ENCODE measurements at regions of chr1 and their contacts with region 1.

Region 1: DNA sequence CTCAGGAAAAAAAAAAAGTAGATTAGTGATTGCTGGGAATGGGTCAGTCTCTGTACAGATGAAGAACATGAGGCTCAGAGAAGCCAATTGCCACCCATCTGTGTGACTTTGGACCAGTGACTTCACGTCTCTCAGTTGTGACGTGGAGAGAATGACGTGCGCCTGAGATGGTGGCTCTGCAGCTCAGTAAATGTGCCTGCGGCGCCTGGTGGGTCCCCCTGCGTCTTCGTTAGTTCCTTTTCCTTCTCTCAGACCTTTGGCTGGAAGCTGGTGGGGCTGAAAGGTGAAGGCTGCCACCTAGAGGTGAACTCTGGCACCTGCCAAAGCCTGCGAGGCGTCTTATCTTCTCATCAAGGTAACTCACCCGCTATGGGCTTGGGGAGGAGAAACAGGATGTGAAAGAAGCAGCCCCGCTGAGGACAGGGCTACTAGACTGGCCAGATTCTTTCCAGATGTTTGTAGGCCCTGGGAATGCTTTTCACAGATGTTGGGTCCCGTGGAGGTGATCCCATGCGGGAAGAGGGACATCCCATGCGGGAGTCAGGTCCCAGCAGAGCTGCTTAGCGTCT is 8.7 kb upstream of the E2F2 start:
- DNase-seq: peak; percentile 97
- ATAC-seq: peak; percentile 95
- H3K4me3 Mint-ChIP-seq: no peak overlapping the region
- H3K27ac Mint-ChIP-seq: peak overlapping the region; percentile 64; the same call in 1 of the 2 replicates
- H3K4me1 Mint-ChIP-seq: peaks cover 10% of the 10 kb centered on the region
- H3K27me3 Mint-ChIP-seq: no peaks in the 10 kb centered on the region; the same call in 1 of the 2 replicates
- CTCF ChIP-seq: peak; percentile 76

Region 2: DNA sequence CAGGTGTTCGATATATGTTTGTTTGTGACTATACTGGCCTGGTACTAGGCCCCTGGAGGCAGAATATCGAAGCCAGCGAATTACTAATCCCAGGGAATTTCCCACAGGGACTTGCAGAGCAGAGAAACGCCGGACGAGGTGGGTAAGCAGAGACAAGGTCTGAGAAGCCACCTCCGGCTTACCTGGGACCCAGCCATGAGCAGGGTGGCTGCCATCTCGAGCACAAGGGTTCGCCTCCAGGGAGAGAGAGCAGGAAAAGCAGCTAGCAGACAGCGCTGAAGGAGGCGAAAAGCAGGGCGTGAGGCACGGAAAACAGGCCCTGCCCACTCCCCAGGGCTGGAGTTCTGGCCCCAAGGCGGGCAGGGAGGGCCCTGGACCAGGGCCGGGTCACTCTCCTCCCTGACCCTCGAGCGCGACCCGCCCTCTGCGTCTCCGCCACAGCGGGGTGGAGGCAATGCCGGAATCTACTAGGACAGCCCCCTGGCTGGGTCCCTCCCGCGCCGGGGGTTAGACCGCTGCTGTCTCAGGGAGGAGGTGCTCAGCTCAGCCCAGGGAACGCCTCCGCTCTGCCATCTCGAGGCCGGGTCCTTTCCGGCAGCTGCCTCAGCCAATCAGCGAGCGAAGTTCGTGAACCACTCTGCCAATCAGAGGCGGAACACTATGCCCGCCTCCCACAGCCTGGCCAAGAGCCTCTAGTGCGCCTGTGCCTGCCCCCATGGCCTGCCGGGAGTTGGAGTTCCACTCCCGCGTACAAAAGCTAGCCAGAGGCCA is 171.8 kb before region 1 on chr1:
- CTCF ChIA-PET with region 1: interaction called, 10 read pairs
- POLR2A ChIA-PET with region 1: no interaction called
- DNase-seq: peak; percentile 98
- ATAC-seq: peak; percentile 90
- H3K4me3 Mint-ChIP-seq: peak overlapping the region; percentile 92
- H3K27ac Mint-ChIP-seq: peak overlapping the region; percentile 96
- H3K4me1 Mint-ChIP-seq: peaks cover 32% of the 10 kb centered on the region
- H3K27me3 Mint-ChIP-seq: peaks cover 50% of the 10 kb centered on the region
- CTCF ChIP-seq: no peak

Region 3: GRCh38 chr1:23436520-23437354 is 103.0 kb before region 1 on chr1:
- CTCF ChIA-PET with region 1: interaction called, 20 read pairs
- POLR2A ChIA-PET with region 1: no interaction called
- DNase-seq: peak; percentile 99
- ATAC-seq: peak; percentile 96
- H3K4me3 Mint-ChIP-seq: peak overlapping the region; percentile 45
- H3K27ac Mint-ChIP-seq: no peak overlapping the region
- H3K4me1 Mint-ChIP-seq: peaks cover 6% of the 10 kb centered on the region
- H3K27me3 Mint-ChIP-seq: no peaks in the 10 kb centered on the region
- CTCF ChIP-seq: no peak

Region 4: DNA sequence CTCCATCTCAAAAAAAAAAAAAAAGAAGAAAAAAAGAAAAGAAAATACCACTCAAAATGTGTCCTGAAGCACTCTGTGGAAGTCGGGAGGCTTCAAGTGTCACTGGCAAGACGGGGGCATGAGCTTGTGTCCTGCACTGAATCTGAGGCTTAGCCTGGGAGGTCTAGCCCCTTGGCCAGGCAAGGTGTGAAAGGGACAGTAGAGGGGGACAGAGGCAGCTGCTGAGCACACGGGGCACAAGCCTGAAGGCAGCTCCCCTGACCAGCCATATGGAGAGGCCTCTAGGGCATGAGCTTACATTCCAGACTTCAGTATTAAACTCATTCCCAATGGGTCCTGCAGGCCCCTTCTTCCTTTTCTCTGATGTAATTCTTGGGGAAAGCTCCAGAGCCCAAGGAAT is 32.3 kb before region 1 on chr1:
- CTCF ChIA-PET with region 1: interaction called, 220 read pairs
- POLR2A ChIA-PET with region 1: no interaction called
- DNase-seq: no peak
- ATAC-seq: no peak
- H3K4me3 Mint-ChIP-seq: no peak overlapping the region
- H3K27ac Mint-ChIP-seq: no peak overlapping the region
- H3K4me1 Mint-ChIP-seq: 0 out of 2 replicates have a peak, but pooled peaks cover 7% of the 10 kb centered on the region
- H3K27me3 Mint-ChIP-seq: no peaks in the 10 kb centered on the region; the same call in 1 of the 2 replicates
- CTCF ChIP-seq: no peak

Region 5: GRCh38 chr1:23559136-23559984 is 19.6 kb after region 1 on chr1 and contains the start of gene ID3:
- CTCF ChIA-PET with region 1: interaction called, 16 read pairs
- POLR2A ChIA-PET with region 1: interaction called, 3 read pairs
- DNase-seq: peak; percentile 96
- ATAC-seq: peak; percentile 47
- H3K4me3 Mint-ChIP-seq: peak within 1 kb of the TSS; percentile 94
- H3K27ac Mint-ChIP-seq: peak within 1 kb of the TSS; percentile 98
- H3K4me1 Mint-ChIP-seq: peaks cover 74% of the 10 kb centered on the region
- H3K27me3 Mint-ChIP-seq: no peaks in the 10 kb centered on the region
- CTCF ChIP-seq: no peak
- total RNA-seq, gene ID3: 168 to 278 TPM (median 273 TPM) in 3 replicates

Region 6: DNA sequence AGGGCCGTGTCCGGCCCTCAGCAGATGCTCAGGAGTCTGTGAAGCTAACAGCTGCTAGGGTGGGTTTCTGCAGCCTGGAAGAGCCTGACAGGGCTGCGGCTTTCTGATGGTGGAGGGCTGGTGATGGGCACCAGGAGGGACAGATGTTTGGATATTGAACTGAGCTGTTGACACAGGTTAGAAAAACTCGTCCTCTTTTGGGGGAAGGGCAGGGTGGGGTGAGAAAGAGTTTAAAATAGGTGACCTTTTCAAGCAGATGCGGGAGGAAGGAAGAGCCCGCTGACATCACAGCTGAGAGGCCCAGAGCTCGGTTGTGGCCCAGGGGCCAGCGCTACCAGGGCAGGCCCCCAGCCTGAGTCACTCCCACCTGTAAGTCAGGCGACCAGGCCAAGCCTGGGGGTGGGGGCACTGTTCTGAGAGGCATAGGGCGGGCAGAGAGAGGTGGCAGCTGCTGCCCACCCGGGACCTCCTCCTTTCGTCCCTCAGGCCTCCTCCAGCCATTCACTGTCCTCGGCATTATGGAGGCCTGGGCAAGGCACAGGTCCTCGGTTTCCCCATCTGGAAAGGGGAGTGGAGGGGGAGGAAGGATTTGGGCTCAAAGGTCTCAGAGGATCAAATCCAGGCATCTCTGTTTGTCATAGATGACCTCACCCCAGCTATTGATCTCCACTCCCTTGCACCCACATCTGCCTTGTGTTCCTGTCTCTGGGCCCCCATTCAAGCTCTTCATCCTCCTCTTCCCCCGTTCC is 51.9 kb after region 1 on chr1:
- CTCF ChIA-PET with region 1: no interaction called
- POLR2A ChIA-PET with region 1: no interaction called
- DNase-seq: no peak
- ATAC-seq: peak; percentile 25; the same call in 1 of the 2 replicates
- H3K4me3 Mint-ChIP-seq: no peak overlapping the region
- H3K27ac Mint-ChIP-seq: peak overlapping the region; percentile 2
- H3K4me1 Mint-ChIP-seq: peaks cover 73% of the 10 kb centered on the region
- H3K27me3 Mint-ChIP-seq: peaks cover 3% of the 10 kb centered on the region; the same call in 1 of the 2 replicates
- CTCF ChIP-seq: no peak

Region 7: DNA sequence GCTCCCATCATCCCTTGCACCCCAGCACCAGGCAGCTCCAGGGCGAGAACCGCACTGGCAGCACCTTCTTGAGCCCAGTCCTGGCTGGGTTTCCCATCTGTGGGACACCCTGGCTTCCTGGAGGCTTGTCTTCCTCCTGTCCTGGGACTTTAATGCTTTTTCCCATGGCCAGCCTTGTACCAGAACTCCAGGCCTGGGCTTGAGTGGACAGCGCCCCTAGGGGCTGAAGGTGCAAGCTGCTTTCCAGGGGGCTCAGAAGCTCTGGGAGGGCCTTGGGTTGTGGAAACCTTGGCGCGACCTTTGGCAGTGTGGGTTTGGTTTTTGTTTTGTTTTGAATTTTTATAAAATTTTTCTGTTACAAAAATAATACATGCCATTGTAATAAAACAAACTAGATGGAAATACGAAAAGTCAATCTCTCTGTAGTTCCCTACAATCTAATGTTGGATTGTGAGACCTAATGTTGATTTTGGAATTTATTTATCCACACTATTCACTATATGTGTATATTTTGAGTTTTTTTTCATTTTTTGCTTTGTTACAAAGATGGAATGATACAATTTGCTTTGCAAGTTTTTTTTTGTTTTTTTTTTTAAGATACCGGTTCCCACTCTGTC is 118.0 kb after region 1 on chr1:
- CTCF ChIA-PET with region 1: interaction called, 28 read pairs
- POLR2A ChIA-PET with region 1: no interaction called
- DNase-seq: peak; percentile 89
- ATAC-seq: peak; percentile 97
- H3K4me3 Mint-ChIP-seq: no peak overlapping the region
- H3K27ac Mint-ChIP-seq: no peak overlapping the region
- H3K4me1 Mint-ChIP-seq: peaks cover 3% of the 10 kb centered on the region
- H3K27me3 Mint-ChIP-seq: no peaks in the 10 kb centered on the region
- CTCF ChIP-seq: peak; percentile 95

Measured in WTC11 (cell line).